MCF 10A (cell line): ENCODE measurements at regions of chr7 and their contacts with region 1.

Region 1: DNA sequence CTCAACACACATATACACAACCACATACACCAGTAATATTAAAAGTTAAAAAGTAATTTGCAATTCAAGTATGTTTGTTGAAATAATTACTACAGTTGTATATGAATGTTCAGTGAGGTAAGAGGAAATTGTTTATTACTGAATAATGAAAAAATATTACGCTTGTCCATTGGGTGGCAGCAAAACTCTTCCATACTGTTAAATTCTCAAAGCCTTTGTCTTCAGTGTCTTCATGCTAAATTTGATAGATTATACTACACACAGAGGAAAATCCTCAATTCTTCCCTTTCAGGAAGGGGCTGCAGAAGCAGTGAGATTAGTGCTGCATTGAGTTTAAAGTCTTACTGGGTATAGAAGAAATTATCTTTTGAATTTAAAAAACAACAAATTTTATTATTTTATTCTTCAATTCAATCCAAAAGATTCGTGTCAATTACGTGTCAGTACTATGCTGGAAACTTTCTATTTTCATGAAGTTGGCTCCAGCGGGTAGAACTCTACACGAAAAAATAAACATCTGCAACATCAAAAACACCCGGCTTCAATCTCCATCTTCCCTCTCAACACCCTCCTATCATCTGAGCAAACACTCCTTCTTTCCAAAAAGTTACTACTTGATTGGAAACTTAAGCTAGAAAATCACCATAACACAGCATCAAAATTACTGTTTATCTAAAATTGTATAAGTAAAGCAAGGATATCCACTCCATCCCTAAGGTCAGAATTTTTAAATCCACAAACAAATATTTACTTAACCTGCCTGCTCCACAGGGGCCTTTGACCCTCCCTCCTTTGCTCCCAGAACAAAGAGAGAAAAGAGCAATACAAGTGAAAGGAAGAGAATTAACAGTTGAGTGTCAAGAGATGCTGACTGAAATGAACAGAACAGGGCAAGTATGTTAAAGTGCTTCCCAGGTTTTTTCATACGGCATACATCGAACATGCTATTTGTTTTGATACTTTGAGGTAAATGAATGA is 37.0 kb upstream of the TES start:
- DNase-seq: peak; percentile 65
- H3K4me3 Mint-ChIP-seq: no peak overlapping the region
- H3K27ac Mint-ChIP-seq: no peak overlapping the region
- H3K4me1 Mint-ChIP-seq: peaks cover 23% of the 10 kb centered on the region
- H3K27me3 Mint-ChIP-seq: peaks cover 20% of the 10 kb centered on the region
- CTCF ChIP-seq: peak; percentile 56

Region 2: GRCh38 chr7:116138202-116138801 is 35.0 kb before region 1 on chr7:
- CTCF ChIA-PET with region 1: interaction called, 7 read pairs
- POLR2A ChIA-PET with region 1: interaction called, 3 read pairs
- intact Hi-C with region 1: loop called (anchors 2 kb)
- DNase-seq: peak; percentile 72
- H3K4me3 Mint-ChIP-seq: no peak overlapping the region
- H3K27ac Mint-ChIP-seq: no peak overlapping the region
- H3K4me1 Mint-ChIP-seq: peaks cover 12% of the 10 kb centered on the region
- H3K27me3 Mint-ChIP-seq: peaks cover 45% of the 10 kb centered on the region
- CTCF ChIP-seq: peak; percentile 64

Region 3: GRCh38 chr7:116195451-116195850 is 22.1 kb after region 1 on chr7:
- CTCF ChIA-PET with region 1: interaction called, 15 read pairs
- POLR2A ChIA-PET with region 1: no interaction called
- intact Hi-C with region 1: no loop called
- DNase-seq: no peak
- H3K4me3 Mint-ChIP-seq: no peak overlapping the region
- H3K27ac Mint-ChIP-seq: no peak overlapping the region
- H3K4me1 Mint-ChIP-seq: peaks cover 6% of the 10 kb centered on the region
- H3K27me3 Mint-ChIP-seq: no peaks in the 10 kb centered on the region
- CTCF ChIP-seq: no peak

Region 4: DNA sequence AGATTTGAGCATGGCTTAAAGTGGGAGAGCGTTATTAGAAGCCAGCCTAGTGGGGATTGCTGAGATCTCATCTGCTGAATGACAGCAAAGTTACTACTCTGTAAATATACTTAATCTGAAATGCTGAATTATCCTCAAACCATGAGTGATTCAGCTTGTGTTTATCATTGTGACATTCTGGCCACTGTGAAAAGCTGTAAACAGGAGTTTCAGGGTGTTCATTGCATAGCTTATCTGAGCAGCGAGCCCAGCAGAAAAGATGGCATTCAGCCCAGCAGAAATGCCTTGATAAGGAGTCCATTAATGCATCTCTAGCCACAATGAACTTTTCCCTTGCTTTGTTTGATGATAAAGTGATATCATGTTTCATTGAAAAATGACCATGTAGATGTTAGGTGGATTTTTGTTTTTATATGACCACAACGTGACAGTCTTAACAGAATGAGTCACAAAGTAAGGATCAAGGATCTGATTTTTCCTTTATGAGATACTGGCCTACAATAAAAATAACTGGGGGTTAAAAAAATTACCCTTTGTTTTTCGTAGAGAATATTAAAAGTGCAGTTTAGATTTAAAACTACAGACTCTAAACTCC is 44.8 kb after region 1 on chr7:
- CTCF ChIA-PET with region 1: interaction called, 35 read pairs
- POLR2A ChIA-PET with region 1: interaction called, 92 read pairs
- intact Hi-C with region 1: no loop called
- DNase-seq: peak; percentile 62
- H3K4me3 Mint-ChIP-seq: no peak overlapping the region
- H3K27ac Mint-ChIP-seq: peak overlapping the region; percentile 81
- H3K4me1 Mint-ChIP-seq: peaks cover 37% of the 10 kb centered on the region
- H3K27me3 Mint-ChIP-seq: no peaks in the 10 kb centered on the region
- CTCF ChIP-seq: no peak

Region 5: GRCh38 chr7:116249708-116250553 is 76.6 kb after region 1 on chr7:
- CTCF ChIA-PET with region 1: interaction called, 8 read pairs
- POLR2A ChIA-PET with region 1: interaction called, 6 read pairs
- intact Hi-C with region 1: loop called (anchors 5 kb)
- DNase-seq: peak; percentile 52
- H3K4me3 Mint-ChIP-seq: no peak overlapping the region
- H3K27ac Mint-ChIP-seq: peak overlapping the region; percentile 22
- H3K4me1 Mint-ChIP-seq: peaks cover 24% of the 10 kb centered on the region
- H3K27me3 Mint-ChIP-seq: no peaks in the 10 kb centered on the region
- CTCF ChIP-seq: peak; percentile 33

Region 6: GRCh38 chr7:116809636-116810266 is 636.4 kb after region 1 on chr7:
- CTCF ChIA-PET with region 1: interaction called, 3 read pairs
- POLR2A ChIA-PET with region 1: no interaction called
- intact Hi-C with region 1: loop called (anchors 1 kb)
- DNase-seq: peak; percentile 77
- H3K4me3 Mint-ChIP-seq: no peak overlapping the region
- H3K27ac Mint-ChIP-seq: peak overlapping the region; percentile 75
- H3K4me1 Mint-ChIP-seq: peaks cover 19% of the 10 kb centered on the region
- H3K27me3 Mint-ChIP-seq: no peaks in the 10 kb centered on the region
- CTCF ChIP-seq: peak; percentile 64

Region 7: GRCh38 chr7:117385340-117386109 is 1212.2 kb after region 1 on chr7:
- CTCF ChIA-PET with region 1: no interaction called
- POLR2A ChIA-PET with region 1: no interaction called
- intact Hi-C with region 1: loop called (anchors 10 kb)
- DNase-seq: peak; percentile 16
- H3K4me3 Mint-ChIP-seq: no peak overlapping the region
- H3K27ac Mint-ChIP-seq: no peak overlapping the region
- H3K4me1 Mint-ChIP-seq: no peaks in the 10 kb centered on the region
- H3K27me3 Mint-ChIP-seq: peaks cover 57% of the 10 kb centered on the region
- CTCF ChIP-seq: peak; percentile 35